ENCODE measurements at regions of chr4 and their contacts with region 1.

Region 1: GRCh38 chr4:37977471-37978247 is 17.5 kb downstream of the PTTG2 start:
- DNase-seq: peak; percentile 86
- ATAC-seq: peak; percentile 74
- H3K4me3 ChIP-seq: peak overlapping the region; percentile 40 to 91 (median 64)
- H3K4me3 Mint-ChIP-seq: peak overlapping the region; percentile 91
- H3K27ac ChIP-seq: peak overlapping the region; percentile 75 to 93
- H3K27ac Mint-ChIP-seq: peak overlapping the region; percentile 93
- H3K4me1 ChIP-seq: peaks cover 45% of the 10 kb centered on the region in 2 donors
- H3K4me1 Mint-ChIP-seq: peaks cover 51% of the 10 kb centered on the region
- H3K27me3 ChIP-seq: no peaks in the 10 kb centered on the region
- H3K27me3 Mint-ChIP-seq: no peaks in the 10 kb centered on the region
- CTCF ChIP-seq: peak; percentile 78

Region 2: GRCh38 chr4:37609626-37610025 is 368.0 kb before region 1 on chr4:
- CTCF ChIA-PET with region 1: no interaction called
- POLR2A ChIA-PET with region 1: no interaction called
- intact Hi-C with region 1: no loop called
- DNase-seq: no peak
- ATAC-seq: no peak
- H3K4me3 ChIP-seq: no peak overlapping the region
- H3K4me3 Mint-ChIP-seq: no peak overlapping the region
- H3K27ac ChIP-seq: no peak overlapping the region
- H3K27ac Mint-ChIP-seq: no peak overlapping the region
- H3K4me1 ChIP-seq: no peaks in the 10 kb centered on the region
- H3K4me1 Mint-ChIP-seq: no peaks in the 10 kb centered on the region
- H3K27me3 ChIP-seq: no peaks in the 10 kb centered on the region
- H3K27me3 Mint-ChIP-seq: no peaks in the 10 kb centered on the region
- CTCF ChIP-seq: no peak

Region 3: DNA sequence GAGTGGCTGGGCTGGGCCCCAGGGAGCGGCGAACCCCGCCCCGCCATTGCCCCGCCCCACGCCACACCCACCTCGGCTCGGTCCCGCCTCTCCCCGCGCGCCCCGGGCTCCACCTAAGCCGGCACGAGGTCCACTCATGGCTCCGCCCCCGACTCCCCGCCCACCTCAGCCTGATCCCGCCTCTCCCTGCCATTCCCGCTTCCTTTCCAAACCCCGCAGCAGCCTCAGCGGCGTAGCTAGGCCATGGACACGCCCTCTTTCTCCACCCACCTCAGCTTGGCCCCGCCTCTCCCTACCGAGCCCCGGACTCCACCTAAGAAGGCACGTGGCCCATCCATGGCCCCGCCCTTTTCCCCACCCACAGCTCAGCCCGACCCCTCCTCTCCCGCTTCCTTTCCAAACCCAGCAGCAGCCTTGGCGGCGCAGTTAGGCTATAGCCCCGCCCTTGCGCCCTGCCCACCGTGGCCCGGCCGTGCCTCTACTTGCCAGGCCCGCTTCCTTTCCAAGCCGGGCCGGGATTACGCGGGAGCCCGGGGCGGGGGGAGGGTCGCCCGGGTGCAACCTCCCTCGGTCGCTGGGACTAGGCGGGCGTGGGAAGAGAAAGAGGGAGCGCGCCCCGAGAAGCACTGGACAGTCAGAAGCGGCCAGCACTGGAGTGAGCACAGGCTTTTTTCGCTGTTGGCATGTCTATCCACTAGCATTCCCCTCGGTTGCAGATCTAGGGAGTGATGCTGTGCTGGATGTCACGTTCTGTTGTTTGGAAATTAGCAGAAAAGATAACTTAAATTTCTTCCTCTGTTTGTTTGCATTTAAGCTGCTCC is 291.1 kb before region 1 on chr4 and contains the start of gene RELL1:
- CTCF ChIA-PET with region 1: no interaction called
- POLR2A ChIA-PET with region 1: no interaction called
- intact Hi-C with region 1: loop called (anchors 5 kb)
- DNase-seq: peak; percentile 96
- ATAC-seq: peak; percentile 85
- H3K4me3 ChIP-seq: peak within 1 kb of the TSS; percentile 66 to 86 (median 81)
- H3K4me3 Mint-ChIP-seq: peak within 1 kb of the TSS; percentile 92
- H3K27ac ChIP-seq: peak within 1 kb of the TSS; percentile 45 to 70
- H3K27ac Mint-ChIP-seq: peak within 1 kb of the TSS; percentile 89
- H3K4me1 ChIP-seq: peaks cover 31% of the 10 kb centered on the region in 2 donors
- H3K4me1 Mint-ChIP-seq: peaks cover 31% of the 10 kb centered on the region
- H3K27me3 ChIP-seq: peaks cover 0 to 12% (median 4%) of the 10 kb centered on the region in 4 experiments
- H3K27me3 Mint-ChIP-seq: peaks cover 12% of the 10 kb centered on the region
- CTCF ChIP-seq: no peak
- total RNA-seq, gene RELL1: 2.7 and 3.2 TPM in 2 replicates

Region 4: DNA sequence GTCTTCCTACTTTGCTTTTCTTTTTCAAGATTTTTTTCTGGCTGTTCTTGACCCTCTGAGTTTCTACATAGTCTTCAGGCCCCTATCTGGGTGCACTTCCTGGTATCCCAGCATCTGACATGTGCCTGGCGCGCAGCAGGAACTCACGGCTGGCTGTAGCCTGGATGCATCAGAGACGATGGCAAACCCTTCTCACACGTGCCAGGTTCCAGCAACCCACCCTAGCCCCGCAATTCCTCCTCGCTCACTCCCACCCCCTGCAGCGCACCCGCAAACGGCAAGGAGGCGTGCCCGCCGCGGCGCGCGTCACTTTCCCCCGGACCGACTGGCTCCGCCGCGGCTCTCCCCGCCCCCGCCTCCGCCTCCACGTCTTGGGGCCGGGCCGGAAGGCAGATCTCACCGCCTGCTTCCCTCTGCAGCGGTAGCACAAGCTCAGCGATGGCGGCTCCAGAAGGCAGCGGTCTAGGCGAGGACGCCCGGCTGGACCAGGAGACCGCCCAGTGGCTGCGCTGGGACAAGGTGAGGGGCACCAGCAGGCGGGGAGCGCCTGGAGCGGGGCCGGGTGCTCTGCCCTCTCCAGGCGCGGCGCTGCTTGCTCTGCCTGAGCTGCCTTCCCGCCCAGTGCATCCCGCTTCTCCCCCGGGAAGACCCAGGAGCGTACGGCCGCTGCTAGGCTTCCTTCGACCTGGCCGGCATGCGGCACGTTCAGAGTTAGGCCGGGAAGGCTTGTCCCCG is 151.2 kb before region 1 on chr4 and contains the start of gene PGM2:
- CTCF ChIA-PET with region 1: interaction called, 5 read pairs
- POLR2A ChIA-PET with region 1: no interaction called
- intact Hi-C with region 1: loop called (anchors 1 kb)
- DNase-seq: peak; percentile 92
- ATAC-seq: peak; percentile 96
- H3K4me3 ChIP-seq: peak within 1 kb of the TSS; percentile 89 to 100 (median 98)
- H3K4me3 Mint-ChIP-seq: peak within 1 kb of the TSS; percentile 99
- H3K27ac ChIP-seq: peak within 1 kb of the TSS; percentile 76 to 81
- H3K27ac Mint-ChIP-seq: peak within 1 kb of the TSS; percentile 96
- H3K4me1 ChIP-seq: peaks cover 18 to 21% of the 10 kb centered on the region in 2 donors
- H3K4me1 Mint-ChIP-seq: peaks cover 28% of the 10 kb centered on the region
- H3K27me3 ChIP-seq: no peaks in the 10 kb centered on the region
- H3K27me3 Mint-ChIP-seq: no peaks in the 10 kb centered on the region
- CTCF ChIP-seq: no peak
- total RNA-seq, gene PGM2: 19.0 and 20.9 TPM in 2 replicates

Region 5: DNA sequence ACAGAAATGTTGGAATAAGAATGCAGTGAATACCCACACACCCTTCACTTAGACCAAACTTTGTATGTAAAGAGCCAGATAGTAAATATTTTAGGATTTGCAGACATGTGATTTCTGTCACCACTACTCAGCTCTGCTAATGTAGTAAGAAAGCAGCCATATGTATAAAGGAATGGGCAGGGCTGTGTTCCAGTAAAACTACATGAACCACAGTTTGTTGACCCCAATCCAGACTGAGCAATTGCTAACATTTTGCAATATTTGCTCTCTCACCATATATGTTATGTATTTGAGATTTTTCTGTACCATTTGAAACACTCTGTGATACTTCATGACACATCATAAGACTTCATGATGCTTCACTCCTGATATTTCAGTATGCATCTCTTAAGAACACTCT is 118.8 kb before region 1 on chr4:
- CTCF ChIA-PET with region 1: no interaction called
- POLR2A ChIA-PET with region 1: no interaction called
- intact Hi-C with region 1: no loop called
- DNase-seq: no peak
- ATAC-seq: no peak
- H3K4me3 ChIP-seq: no peak overlapping the region
- H3K4me3 Mint-ChIP-seq: no peak overlapping the region
- H3K27ac ChIP-seq: no peak overlapping the region
- H3K27ac Mint-ChIP-seq: no peak overlapping the region
- H3K4me1 ChIP-seq: no peaks in the 10 kb centered on the region
- H3K4me1 Mint-ChIP-seq: peaks cover 2% of the 10 kb centered on the region
- H3K27me3 ChIP-seq: no peaks in the 10 kb centered on the region
- H3K27me3 Mint-ChIP-seq: no peaks in the 10 kb centered on the region
- CTCF ChIP-seq: no peak

Region 6: DNA sequence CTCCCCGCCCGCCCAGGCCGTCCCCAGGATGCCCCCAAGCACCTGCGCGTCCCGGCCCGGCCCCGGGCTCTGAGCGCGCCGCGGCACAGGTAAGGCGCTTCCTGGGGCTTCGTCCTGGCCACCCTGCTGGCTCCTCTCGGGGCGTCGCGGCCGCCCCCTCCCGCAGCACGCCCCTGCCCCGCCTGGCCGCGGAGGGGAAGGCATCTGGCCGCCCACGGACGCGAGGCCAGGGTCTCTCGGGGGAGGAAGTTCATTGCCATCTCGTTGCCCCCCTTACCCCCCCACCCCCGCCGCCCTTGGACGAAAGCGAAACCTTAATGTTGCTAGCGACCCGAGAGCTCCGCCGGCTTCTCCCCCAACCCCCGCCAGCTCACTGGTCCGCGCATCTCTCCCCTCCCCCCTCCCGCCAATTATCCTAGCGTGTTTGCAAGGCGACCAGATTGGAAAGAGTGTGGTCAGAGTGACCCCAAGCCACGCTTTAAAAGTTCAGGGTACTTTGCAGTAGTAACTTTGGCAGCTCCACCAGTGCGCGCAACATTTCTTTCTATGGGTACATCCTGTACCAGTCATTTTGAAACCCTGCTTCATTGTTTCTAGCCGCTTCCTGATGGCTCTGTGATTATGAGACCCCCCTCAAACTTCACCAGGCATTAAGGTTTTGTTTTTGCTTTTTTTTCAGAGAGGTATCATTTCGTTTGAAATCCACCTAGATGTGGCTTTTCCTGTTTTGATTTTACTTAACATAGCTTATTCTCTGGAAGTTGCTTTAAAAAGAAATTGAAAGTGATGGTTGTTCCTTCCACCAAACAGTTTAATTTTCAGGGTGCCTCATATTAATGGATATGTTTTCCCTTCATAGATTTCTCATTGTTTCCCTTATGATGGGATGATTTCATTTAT is 86.1 kb before region 1 on chr4:
- CTCF ChIA-PET with region 1: interaction called, 23 read pairs
- POLR2A ChIA-PET with region 1: interaction called, 7 read pairs
- intact Hi-C with region 1: loop called (anchors 1 kb)
- DNase-seq: peak; percentile 85
- ATAC-seq: peak; percentile 52
- H3K4me3 ChIP-seq: peak overlapping the region; percentile 72 to 96 (median 72)
- H3K4me3 Mint-ChIP-seq: peak overlapping the region; percentile 91
- H3K27ac ChIP-seq: peak overlapping the region; percentile 92 to 95
- H3K27ac Mint-ChIP-seq: peak overlapping the region; percentile 98
- H3K4me1 ChIP-seq: peaks cover 49 to 50% of the 10 kb centered on the region in 2 donors
- H3K4me1 Mint-ChIP-seq: peaks cover 62% of the 10 kb centered on the region
- H3K27me3 ChIP-seq: no peaks in the 10 kb centered on the region
- H3K27me3 Mint-ChIP-seq: no peaks in the 10 kb centered on the region
- CTCF ChIP-seq: no peak

Region 7: DNA sequence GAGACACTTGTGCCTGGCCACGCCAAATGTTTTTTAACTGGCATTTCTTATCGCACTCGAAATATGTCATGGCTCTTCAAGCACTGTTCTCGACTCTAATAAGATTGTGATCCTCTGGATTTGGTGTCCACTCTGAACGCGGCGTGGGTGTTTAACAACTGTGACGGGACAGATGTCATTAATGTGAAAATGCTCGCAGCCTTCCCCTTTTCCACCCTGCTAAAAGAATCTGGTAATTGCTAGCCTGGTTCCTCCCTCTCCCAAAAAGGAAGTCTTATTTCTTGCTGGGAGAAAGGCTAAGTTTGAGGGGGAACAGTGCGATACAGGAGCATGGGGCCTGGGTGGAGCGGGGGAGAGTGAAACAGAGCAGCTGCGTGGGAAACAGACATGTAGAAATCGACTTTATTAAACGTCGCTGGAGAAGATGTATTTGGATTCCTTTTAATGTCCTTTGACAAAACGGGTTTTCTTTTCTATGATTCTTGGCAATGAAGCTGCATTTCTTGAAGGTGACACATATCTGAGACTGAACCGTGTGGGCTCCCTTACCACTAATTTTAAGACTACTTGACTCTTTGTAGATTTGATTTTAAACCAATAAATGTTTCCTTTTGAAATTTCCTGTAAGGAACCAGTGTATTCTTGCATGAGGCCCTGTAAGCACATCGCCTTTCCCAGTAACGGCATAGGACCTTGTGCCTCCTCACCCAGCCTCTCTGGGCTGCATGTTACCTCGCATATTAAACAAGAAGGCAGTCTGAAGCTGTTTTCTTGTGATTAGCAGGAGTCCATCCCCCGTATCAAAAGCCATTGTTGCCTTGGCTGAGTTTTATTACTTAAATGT is 68.9 kb before region 1 on chr4:
- CTCF ChIA-PET with region 1: no interaction called
- POLR2A ChIA-PET with region 1: no interaction called
- intact Hi-C with region 1: no loop called
- DNase-seq: no peak
- ATAC-seq: no peak
- H3K4me3 ChIP-seq: no peak overlapping the region
- H3K4me3 Mint-ChIP-seq: no peak overlapping the region
- H3K27ac ChIP-seq: no peak overlapping the region
- H3K27ac Mint-ChIP-seq: no peak overlapping the region
- H3K4me1 ChIP-seq: no peaks in the 10 kb centered on the region
- H3K4me1 Mint-ChIP-seq: peaks cover 20% of the 10 kb centered on the region
- H3K27me3 ChIP-seq: no peaks in the 10 kb centered on the region
- H3K27me3 Mint-ChIP-seq: no peaks in the 10 kb centered on the region
- CTCF ChIP-seq: no peak

Region 8: GRCh38 chr4:38319456-38320342 is 342.0 kb after region 1 on chr4:
- CTCF ChIA-PET with region 1: no interaction called
- POLR2A ChIA-PET with region 1: no interaction called
- intact Hi-C with region 1: loop called (anchors 10 kb)
- DNase-seq: peak; percentile 85
- ATAC-seq: peak; percentile 81
- H3K4me3 ChIP-seq: peak overlapping the region; percentile 43 to 74 (median 54)
- H3K4me3 Mint-ChIP-seq: peak overlapping the region; percentile 83
- H3K27ac ChIP-seq: peak overlapping the region; percentile 82 to 87
- H3K27ac Mint-ChIP-seq: peak overlapping the region; percentile 86
- H3K4me1 ChIP-seq: peaks cover 16 to 21% of the 10 kb centered on the region in 2 donors
- H3K4me1 Mint-ChIP-seq: peaks cover 29% of the 10 kb centered on the region
- H3K27me3 ChIP-seq: no peaks in the 10 kb centered on the region
- H3K27me3 Mint-ChIP-seq: no peaks in the 10 kb centered on the region
- CTCF ChIP-seq: peak; percentile 93

Region 9: GRCh38 chr4:39044364-39044955 is 1066.8 kb after region 1 on chr4:
- CTCF ChIA-PET with region 1: no interaction called
- POLR2A ChIA-PET with region 1: no interaction called
- intact Hi-C with region 1: loop called (anchors 5 kb)
- DNase-seq: peak; percentile 99
- ATAC-seq: peak; percentile 85
- H3K4me3 ChIP-seq: peak overlapping the region; percentile 66 to 94 (median 75)
- H3K4me3 Mint-ChIP-seq: peak overlapping the region; percentile 80
- H3K27ac ChIP-seq: peak overlapping the region; percentile 93 to 95
- H3K27ac Mint-ChIP-seq: peak overlapping the region; percentile 90
- H3K4me1 ChIP-seq: peaks cover 45 to 48% of the 10 kb centered on the region in 2 donors
- H3K4me1 Mint-ChIP-seq: peaks cover 59% of the 10 kb centered on the region
- H3K27me3 ChIP-seq: no peaks in the 10 kb centered on the region
- H3K27me3 Mint-ChIP-seq: no peaks in the 10 kb centered on the region
- CTCF ChIP-seq: no peak

Measured in B cell (primary cell).